ENCODE measurements at regions of chr6 and their contacts with region 1.

Region 1: GRCh38 chr6:27871924-27872638 is 40.1 kb downstream of the OR2B2 start:
- DNase-seq: peak; percentile 95
- H3K4me3 ChIP-seq: peak overlapping the region; percentile 69
- H3K27ac ChIP-seq: peak overlapping the region; percentile 99
- H3K4me1 ChIP-seq: peaks cover 71% of the 10 kb centered on the region
- CTCF ChIP-seq: peak; percentile 44

Region 2: DNA sequence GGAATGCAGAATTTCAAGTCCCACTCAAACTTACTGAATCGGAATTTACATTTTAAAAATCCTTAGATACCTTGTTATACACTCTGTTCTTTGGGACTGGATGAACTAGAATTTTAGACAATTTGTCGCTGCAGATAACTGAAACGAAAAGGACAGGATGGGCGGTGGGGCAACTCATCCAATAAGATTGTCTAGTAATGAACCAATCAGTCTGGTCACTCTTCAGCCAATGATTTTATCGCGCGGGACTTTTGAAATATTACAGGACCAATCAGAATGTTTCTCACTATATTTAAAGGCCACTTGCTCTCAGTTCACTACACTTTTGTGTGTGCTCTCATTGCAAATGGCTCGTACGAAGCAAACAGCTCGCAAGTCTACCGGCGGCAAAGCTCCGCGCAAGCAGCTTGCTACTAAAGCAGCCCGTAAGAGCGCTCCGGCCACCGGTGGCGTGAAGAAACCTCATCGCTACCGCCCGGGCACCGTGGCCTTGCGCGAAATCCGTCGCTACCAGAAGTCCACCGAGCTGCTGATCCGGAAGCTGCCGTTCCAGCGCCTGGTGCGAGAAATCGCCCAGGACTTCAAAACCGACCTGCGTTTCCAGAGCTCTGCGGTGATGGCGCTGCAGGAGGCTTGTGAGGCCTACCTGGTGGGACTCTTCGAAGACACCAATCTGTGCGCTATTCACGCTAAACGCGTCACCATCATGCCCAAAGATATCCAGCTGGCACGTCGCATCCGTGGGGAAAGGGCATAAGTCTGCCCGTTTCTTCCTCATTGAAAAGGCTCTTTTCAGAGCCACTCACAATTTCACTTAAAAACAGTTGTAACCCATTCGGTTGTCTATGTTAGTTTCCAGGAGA is 1826.8 kb before region 1 on chr6:
- CTCF ChIA-PET with region 1: no interaction called
- POLR2A ChIA-PET with region 1: interaction called, 16 read pairs
- intact Hi-C with region 1: no loop called
- DNase-seq: peak; percentile 97
- H3K4me3 ChIP-seq: peak overlapping the region; percentile 67
- H3K27ac ChIP-seq: peak overlapping the region; percentile 99
- H3K4me1 ChIP-seq: peaks cover 66% of the 10 kb centered on the region
- CTCF ChIP-seq: peak; percentile 54

Region 3: DNA sequence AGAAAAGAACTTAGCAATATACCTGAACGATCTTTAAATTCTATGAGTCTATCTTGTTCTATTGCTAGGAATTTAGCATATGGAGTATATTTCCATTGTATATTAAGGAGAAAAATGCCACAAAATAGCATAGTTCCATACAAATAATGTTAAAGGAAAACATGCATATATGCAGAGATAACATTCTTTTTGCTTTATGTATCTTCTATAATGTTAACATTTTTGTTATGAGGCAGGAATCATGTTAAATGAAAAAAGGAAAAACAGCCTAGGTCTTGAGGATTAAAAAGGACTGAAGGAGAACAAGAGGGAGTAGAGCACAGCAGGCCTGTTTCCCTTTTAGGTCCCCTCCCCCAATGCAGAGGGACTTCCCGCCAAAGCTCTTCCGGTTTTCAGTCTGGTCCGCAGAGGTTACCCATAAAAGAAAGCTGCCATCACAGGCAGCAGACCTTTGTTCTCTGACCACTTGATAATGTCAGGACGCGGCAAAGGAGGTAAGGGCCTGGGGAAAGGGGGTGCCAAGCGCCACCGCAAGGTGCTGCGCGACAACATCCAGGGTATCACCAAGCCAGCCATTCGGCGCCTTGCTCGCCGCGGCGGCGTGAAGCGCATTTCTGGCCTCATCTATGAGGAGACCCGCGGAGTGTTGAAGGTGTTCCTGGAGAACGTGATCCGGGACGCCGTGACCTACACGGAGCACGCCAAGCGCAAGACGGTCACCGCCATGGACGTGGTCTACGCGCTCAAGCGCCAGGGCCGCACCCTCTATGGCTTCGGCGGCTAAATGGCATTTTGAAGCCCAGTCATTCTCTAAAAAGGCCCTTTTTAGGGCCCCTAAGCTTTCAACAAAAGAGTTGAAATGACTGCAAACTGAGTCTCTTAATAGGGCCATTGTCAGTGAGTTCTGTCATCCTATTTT is 733.0 kb before region 1 on chr6:
- CTCF ChIA-PET with region 1: no interaction called
- POLR2A ChIA-PET with region 1: interaction called, 34 read pairs
- intact Hi-C with region 1: loop called (anchors 2 kb)
- DNase-seq: peak; percentile 95
- H3K4me3 ChIP-seq: peak overlapping the region; percentile 77
- H3K27ac ChIP-seq: peak overlapping the region; percentile 99
- H3K4me1 ChIP-seq: peaks cover 78% of the 10 kb centered on the region
- CTCF ChIP-seq: no peak

Region 4: DNA sequence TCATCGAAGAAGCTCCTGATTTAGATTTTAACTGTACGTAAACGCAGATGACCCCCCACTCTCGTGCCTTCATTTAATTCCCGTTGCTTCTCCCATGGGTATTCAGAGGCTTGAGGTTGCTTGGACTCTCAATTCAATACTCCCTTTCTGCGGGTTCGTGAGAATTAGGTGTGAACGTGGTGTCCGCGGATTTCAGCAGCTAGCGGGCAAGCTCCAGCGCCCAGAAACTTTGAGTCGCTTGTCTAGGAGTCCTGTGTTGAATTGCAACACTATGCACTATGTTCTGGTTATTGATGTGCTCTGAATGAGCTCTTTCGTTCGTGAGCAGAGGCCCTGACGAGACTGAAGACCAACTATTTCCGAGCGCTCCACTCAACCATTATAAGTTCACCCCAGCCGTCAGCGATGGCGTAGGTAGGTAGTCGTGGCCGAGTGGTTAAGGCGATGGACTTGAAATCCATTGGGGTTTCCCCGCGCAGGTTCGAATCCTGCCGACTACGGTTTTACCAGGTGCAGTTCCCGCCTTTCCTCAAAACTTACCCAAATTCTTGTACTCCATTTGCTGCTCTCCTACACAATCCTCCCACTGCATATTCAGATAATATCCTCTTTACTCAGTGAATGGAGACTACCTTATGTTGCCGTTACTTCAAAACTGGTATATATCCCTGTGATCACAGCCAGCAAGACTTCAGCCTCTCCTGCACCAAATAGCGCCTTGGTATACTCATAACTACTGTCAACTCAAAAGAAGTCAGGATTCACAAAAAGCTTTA is 326.6 kb before region 1 on chr6:
- CTCF ChIA-PET with region 1: no interaction called
- POLR2A ChIA-PET with region 1: no interaction called
- intact Hi-C with region 1: no loop called
- DNase-seq: no peak
- H3K4me3 ChIP-seq: no peak overlapping the region
- H3K27ac ChIP-seq: no peak overlapping the region
- H3K4me1 ChIP-seq: no peaks in the 10 kb centered on the region
- CTCF ChIP-seq: no peak

Region 5: DNA sequence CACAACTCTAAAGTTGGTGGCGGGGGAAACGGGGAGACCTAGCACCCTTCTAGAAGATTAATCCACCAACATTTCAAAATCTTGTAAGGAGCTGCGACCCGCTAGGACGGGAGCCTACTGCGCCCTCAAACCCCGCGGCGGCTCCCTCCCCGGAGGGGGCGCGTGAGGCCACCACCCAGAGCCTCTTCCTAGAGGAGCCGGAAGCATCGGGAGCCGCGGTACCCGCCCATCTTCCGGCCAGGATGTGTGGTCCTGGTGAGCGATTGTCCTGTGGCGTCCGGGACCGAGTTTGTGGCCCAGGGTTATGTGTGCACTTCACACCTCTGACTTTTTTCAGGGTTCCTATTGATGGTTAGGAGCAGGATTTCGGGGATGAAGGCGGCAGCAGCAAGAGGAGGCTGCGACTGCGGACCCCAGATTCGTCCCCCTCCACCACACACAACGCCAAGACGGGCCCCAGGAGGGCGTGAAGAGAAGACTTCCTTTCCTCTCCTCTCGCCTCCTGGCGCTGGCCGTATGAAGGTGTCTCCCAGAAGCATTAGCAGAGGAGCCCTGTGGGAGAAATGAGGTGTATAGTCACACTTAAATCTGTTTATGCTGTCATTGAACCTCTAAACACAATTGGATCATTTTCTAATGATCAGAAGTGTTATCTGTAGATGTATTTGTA is 219.0 kb after region 1 on chr6:
- CTCF ChIA-PET with region 1: no interaction called
- POLR2A ChIA-PET with region 1: no interaction called
- intact Hi-C with region 1: no loop called
- DNase-seq: no peak
- H3K4me3 ChIP-seq: no peak overlapping the region
- H3K27ac ChIP-seq: no peak overlapping the region
- H3K4me1 ChIP-seq: no peaks in the 10 kb centered on the region
- CTCF ChIP-seq: no peak

Measured in OCI-LY7 (cell line).